ENCODE measurements at regions of chr4 and their contacts with region 1.

Region 1: DNA sequence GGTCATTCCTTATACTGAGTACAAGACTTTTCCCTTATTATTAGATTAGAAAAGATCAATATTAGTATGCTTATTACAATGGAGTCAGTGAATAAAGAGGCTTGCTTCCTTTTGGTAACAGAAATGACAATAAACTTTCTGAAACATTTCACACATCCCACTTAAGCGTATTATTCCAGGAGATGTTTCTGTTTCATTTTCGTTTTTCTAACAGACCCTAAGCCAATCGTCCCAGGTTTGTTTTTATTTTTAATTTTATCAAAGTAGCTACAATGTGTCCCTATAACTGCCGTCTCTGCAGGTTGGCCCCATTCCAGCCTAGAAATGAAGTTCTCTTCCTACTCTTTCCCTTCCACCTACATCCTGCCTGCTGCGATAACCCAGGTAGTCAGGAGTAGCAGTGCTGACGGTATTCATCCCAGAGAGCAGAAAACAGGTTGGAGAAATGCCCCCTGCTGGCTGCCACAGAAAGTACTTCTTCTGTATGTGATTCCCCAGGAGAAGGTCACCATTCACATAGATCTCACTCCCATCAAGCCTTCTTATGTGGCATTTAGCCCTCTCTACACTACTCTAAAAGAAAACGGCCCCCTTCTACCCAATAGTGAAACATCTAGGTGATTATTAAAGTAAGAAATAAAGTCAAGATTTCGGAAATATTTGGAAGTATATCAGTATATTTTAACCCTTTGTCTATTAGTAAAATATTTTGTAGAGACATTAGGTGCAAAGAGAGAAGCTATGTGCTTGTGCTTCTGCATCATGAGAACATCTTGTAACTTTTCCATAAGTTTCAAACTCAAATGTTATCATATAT is 40.4 kb downstream of the ENPEP start:
- DNase-seq: peak; percentile 78
- H3K4me3 ChIP-seq: no peak overlapping the region
- H3K4me3 Mint-ChIP-seq: peak overlapping the region; percentile 64
- H3K27ac Mint-ChIP-seq: no peak overlapping the region
- H3K4me1 ChIP-seq: no peaks in the 10 kb centered on the region
- H3K4me1 Mint-ChIP-seq: no peaks in the 10 kb centered on the region
- H3K27me3 ChIP-seq: no peaks in the 10 kb centered on the region
- H3K27me3 Mint-ChIP-seq: no peaks in the 10 kb centered on the region
- CTCF ChIP-seq: peak; percentile 78 to 82

Region 2: DNA sequence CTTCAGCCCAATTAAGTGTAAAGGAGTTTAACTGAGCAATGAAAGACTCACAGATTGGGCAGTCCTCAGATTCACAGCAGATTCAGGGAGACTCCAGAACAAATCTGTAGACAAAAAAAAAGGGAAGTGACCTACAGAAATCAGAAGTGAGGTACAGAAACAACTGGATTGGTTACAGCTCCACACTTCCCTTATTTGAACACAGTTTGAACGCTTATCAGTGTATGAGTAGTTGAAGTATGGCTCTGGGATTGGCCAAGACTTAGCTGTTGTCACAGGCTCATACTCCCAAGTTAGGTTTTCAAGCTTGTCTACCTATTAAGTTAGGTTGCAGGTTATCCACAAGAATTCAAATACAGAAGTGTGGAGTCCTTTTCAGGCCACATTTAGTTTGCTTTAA is 205.5 kb before region 1 on chr4:
- CTCF ChIA-PET with region 1: interaction called, 5 read pairs
- POLR2A ChIA-PET with region 1: no interaction called
- intact Hi-C with region 1: loop called (anchors 1 kb)
- DNase-seq: no peak
- H3K4me3 ChIP-seq: no peak overlapping the region
- H3K4me3 Mint-ChIP-seq: no peak overlapping the region
- H3K27ac Mint-ChIP-seq: no peak overlapping the region
- H3K4me1 ChIP-seq: no peaks in the 10 kb centered on the region
- H3K4me1 Mint-ChIP-seq: no peaks in the 10 kb centered on the region
- H3K27me3 ChIP-seq: no peaks in the 10 kb centered on the region; the same call in 1 of the 2 replicates
- H3K27me3 Mint-ChIP-seq: peaks cover 8% of the 10 kb centered on the region
- CTCF ChIP-seq: no peak

Region 3: GRCh38 chr4:110586131-110586850 is 70.0 kb after region 1 on chr4:
- CTCF ChIA-PET with region 1: no interaction called
- POLR2A ChIA-PET with region 1: no interaction called
- intact Hi-C with region 1: loop called (anchors 1 kb)
- DNase-seq: peak in 1 of 2 experiments; percentile 6
- H3K4me3 ChIP-seq: no peak overlapping the region
- H3K4me3 Mint-ChIP-seq: no peak overlapping the region
- H3K27ac Mint-ChIP-seq: no peak overlapping the region
- H3K4me1 ChIP-seq: no peaks in the 10 kb centered on the region
- H3K4me1 Mint-ChIP-seq: no peaks in the 10 kb centered on the region
- H3K27me3 ChIP-seq: no peaks in the 10 kb centered on the region
- H3K27me3 Mint-ChIP-seq: no peaks in the 10 kb centered on the region
- CTCF ChIP-seq: peak; percentile 40 to 52

Measured in Caco-2 (cell line).